AG04449 (cell line): ENCODE measurements at regions of chr3 and their contacts with region 1.

Region 1: GRCh38 chr3:15268033-15268631 is 62.1 kb downstream of the CAPN7 start:
- DNase-seq: peak; percentile 31
- H3K4me3 ChIP-seq: no peak overlapping the region
- CTCF ChIP-seq: peak; percentile 94

Region 2: DNA sequence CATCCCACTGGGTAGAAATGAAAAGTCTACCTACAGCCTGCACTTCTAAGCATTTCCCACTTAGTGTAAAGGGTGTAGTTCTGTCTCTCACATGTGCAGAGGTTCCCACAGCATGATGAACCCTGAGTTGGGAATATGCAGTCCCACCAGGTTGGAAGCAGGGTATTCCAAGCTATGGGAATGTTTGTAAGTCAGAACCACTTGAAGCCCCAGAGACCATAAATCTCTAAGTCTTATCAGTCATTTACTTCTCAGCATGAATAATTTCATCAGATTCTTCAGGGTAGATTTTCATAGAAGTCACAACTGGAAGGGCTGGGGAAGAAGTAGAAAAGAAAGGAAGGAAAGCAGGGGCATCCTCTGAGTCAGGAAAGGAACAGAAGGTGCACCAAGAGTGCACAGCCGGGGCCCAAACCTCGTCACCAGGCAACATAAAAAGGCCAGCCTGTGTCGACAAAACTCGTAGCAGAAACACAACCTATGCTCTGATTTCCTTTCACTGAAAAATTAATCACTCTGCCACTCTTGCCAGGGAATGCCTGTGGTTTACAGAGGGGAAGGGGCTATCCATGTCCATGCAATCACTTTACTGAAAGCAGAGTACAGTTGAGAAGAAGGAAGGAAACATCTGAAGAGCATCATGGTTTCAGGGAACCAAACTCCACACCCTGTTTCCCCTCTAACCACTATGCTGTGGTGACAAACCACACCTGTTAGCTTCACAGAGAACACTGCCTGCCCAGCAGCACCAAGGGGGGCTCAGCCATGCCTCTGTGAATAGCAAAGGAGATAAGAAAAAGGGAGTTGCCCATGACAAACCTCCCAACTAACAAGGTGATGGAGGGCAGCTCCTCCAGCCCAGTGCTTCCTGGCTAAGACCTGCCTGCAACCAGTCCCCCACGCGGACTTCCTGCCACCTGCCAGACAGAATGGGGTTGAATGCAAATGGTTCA is 23.7 kb after region 1 on chr3:
- CTCF ChIA-PET with region 1: interaction called, 159 read pairs
- POLR2A ChIA-PET with region 1: no interaction called
- DNase-seq: no peak
- H3K4me3 ChIP-seq: no peak overlapping the region
- CTCF ChIP-seq: no peak

Region 3: DNA sequence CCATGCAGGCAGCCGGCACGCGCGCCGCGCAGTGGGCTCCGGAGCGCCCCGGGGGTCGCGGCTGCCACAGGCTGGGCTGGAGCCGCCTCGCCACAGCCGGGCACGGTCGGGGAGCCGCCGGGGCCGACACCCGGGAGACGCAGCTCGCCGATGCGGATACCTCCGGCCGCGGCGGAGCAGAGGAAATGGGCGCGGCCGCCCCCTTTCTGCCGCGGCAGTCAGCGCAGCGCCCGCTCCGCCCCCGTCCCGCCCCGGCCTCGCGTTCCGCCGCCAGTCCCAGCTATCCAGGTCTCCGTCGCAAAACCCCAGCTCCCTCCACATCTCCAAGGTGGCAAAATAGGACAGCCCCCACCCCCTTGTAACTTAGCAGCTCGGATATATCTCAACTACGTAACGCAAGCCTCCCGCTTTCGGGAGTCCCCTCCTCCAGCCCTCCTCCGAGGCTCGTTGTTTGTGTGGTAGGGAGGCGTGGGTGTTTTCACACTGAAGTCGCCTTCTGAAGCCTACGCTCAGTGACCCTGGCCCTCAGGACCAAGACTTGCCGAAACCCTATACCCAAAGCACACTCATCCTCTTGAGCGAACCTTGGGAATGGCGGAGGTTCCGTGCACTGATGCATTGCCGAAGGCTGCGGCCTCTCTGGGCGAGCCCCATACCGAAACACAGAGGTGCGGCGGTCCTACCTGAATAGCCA is 64.4 kb after region 1 on chr3 and contains the start of gene SH3BP5:
- CTCF ChIA-PET with region 1: interaction called, 155 read pairs
- POLR2A ChIA-PET with region 1: no interaction called
- DNase-seq: no peak
- H3K4me3 ChIP-seq: peak within 1 kb of the TSS; percentile 90
- CTCF ChIP-seq: peak; percentile 75

Region 4: GRCh38 chr3:15367059-15367458 is 98.9 kb after region 1 on chr3:
- CTCF ChIA-PET with region 1: interaction called, 366 read pairs
- POLR2A ChIA-PET with region 1: interaction called, 3 read pairs
- DNase-seq: no peak
- H3K4me3 ChIP-seq: no peak overlapping the region
- CTCF ChIP-seq: no peak

Region 5: DNA sequence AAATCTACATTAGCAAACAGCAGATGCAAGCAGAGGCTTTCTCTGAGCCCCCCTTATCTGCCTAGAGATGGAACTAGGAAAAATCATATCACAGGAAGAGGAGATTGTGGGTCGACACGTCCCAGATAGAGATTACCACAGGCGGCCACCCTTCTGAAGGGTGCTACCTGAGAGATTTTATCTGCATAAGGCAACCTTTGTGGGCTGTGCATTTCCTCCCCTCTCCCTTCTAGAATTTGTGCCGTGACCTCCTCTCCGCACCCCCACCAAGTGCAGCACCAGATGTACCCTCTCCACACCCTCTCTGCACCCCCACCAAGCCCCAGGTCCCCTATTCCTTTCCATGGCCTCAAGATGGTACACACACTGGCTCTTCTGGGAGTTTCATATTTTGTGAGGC is 131.8 kb after region 1 on chr3:
- CTCF ChIA-PET with region 1: interaction called, 409 read pairs
- POLR2A ChIA-PET with region 1: no interaction called
- DNase-seq: no peak
- H3K4me3 ChIP-seq: no peak overlapping the region
- CTCF ChIP-seq: no peak

Region 6: DNA sequence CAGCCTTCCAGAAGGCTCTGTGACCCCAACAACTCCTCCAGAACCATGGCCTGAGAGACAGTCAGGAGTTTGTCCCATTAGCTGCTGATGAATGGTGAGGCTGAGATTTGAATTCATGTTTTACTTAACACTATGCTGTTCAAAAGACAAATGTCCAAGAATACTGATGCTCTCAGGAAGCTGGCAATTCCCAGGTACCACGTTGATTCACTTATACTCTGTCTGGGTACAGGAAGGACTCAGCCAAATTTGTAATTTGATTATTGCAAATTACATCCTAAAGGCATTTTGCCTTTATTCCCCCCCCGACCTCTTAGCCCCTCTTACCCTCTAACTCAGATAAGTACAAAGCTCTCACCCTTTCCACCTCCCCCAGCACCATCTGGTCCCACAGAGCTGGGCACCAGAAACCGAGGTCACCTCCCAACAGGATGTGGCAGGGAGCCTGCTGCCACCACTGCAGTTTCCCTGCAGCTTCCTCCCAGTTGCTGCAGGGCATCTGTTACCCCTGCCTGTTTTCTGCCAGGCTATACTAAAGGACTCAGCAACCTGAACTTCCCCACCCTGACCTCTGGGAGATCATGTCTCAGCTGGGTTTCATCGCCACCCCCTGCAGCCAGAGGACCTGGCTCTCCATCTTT is 192.9 kb after region 1 on chr3:
- CTCF ChIA-PET with region 1: no interaction called
- POLR2A ChIA-PET with region 1: no interaction called
- DNase-seq: no peak
- H3K4me3 ChIP-seq: no peak overlapping the region
- CTCF ChIP-seq: no peak

Region 7: DNA sequence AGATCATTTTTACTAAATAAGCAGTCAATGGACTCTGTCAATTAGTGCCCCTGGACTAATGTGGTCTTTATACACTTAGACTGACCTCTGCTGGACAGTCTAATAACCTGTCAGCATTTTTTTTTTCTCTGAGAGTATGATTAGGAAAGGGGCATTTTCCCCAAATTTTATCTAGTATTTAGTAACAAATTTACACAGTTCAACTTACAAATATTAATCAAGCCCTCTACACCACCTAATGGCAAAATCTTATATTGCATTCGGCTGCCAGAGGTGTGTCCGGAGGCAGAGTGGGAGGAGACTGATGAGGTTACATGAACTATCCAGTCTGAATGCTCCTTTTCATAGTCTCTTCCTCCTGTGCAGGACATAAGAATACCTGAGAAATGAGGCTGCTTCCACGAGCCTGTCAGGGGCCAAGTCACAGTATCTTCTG is 289.4 kb after region 1 on chr3:
- CTCF ChIA-PET with region 1: interaction called, 46 read pairs
- POLR2A ChIA-PET with region 1: no interaction called
- DNase-seq: peak; percentile 41
- H3K4me3 ChIP-seq: no peak overlapping the region
- CTCF ChIP-seq: peak; percentile 39